OCI-LY7 (cell line): ENCODE measurements at regions of chr11 and their contacts with region 1.

Region 1: GRCh38 chr11:63738720-63739360 is 29.7 kb downstream of the ZFTA start:
- DNase-seq: peak; percentile 69
- H3K4me3 ChIP-seq: no peak overlapping the region
- H3K27ac ChIP-seq: no peak overlapping the region
- H3K4me1 ChIP-seq: peaks cover 3% of the 10 kb centered on the region
- CTCF ChIP-seq: peak; percentile 96

Region 2: GRCh38 chr11:63099555-63099954 is 639.3 kb before region 1 on chr11:
- CTCF ChIA-PET with region 1: no interaction called
- POLR2A ChIA-PET with region 1: no interaction called
- intact Hi-C with region 1: no loop called
- DNase-seq: no peak
- H3K4me3 ChIP-seq: no peak overlapping the region
- H3K27ac ChIP-seq: no peak overlapping the region
- H3K4me1 ChIP-seq: no peaks in the 10 kb centered on the region
- CTCF ChIP-seq: no peak

Region 3: DNA sequence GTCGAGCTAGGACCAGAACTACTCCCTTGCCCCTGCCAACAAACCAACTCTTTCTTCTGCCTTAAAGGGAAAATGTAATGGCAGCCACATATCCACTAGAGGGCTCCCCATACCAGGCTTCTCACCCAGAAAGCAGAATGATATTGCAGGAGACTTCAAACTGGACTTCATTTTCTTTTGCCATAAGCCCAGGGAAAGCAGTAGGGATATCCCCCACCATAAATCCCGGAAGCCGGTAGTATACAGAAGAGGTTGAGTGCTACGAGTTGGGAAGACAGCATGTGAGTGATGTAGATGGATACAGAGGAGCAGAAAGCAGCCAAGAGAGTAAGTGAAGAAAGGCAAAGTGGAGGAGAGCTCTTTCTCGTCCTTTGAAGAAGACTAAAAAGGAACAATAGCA is 259.9 kb before region 1 on chr11:
- CTCF ChIA-PET with region 1: no interaction called
- POLR2A ChIA-PET with region 1: no interaction called
- intact Hi-C with region 1: loop called (anchors 2 kb)
- DNase-seq: peak; percentile 71
- H3K4me3 ChIP-seq: no peak overlapping the region
- H3K27ac ChIP-seq: no peak overlapping the region
- H3K4me1 ChIP-seq: no peaks in the 10 kb centered on the region
- CTCF ChIP-seq: peak; percentile 99

Region 4: DNA sequence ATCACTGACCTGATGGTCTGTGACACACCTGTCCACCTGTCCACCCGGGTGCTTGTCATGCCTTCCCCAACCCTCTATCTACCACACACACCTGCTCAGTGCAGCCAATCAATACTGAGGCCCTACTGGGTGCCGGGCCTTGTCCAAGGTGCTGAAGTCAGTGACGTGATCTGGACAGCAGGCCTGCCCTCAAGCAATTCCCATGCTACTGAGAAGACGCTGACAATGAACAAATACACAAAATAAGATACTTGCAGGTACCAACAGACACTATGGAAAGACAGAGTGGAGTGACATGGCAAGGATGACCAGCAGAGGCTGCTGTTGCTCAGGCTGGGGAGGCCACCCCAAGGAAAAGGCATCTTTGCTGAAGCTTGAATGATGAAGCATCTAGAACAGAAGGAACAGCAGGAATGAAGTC is 145.9 kb before region 1 on chr11:
- CTCF ChIA-PET with region 1: no interaction called
- POLR2A ChIA-PET with region 1: no interaction called
- intact Hi-C with region 1: loop called (anchors 1 kb)
- DNase-seq: peak; percentile 33
- H3K4me3 ChIP-seq: no peak overlapping the region
- H3K27ac ChIP-seq: no peak overlapping the region
- H3K4me1 ChIP-seq: no peaks in the 10 kb centered on the region
- CTCF ChIP-seq: peak; percentile 75

Region 5: GRCh38 chr11:63635762-63636465 is 102.9 kb before region 1 on chr11:
- CTCF ChIA-PET with region 1: no interaction called
- POLR2A ChIA-PET with region 1: no interaction called
- intact Hi-C with region 1: loop called (anchors 5 kb)
- DNase-seq: peak; percentile 62
- H3K4me3 ChIP-seq: no peak overlapping the region
- H3K27ac ChIP-seq: no peak overlapping the region
- H3K4me1 ChIP-seq: no peaks in the 10 kb centered on the region
- CTCF ChIP-seq: peak; percentile 91

Region 6: DNA sequence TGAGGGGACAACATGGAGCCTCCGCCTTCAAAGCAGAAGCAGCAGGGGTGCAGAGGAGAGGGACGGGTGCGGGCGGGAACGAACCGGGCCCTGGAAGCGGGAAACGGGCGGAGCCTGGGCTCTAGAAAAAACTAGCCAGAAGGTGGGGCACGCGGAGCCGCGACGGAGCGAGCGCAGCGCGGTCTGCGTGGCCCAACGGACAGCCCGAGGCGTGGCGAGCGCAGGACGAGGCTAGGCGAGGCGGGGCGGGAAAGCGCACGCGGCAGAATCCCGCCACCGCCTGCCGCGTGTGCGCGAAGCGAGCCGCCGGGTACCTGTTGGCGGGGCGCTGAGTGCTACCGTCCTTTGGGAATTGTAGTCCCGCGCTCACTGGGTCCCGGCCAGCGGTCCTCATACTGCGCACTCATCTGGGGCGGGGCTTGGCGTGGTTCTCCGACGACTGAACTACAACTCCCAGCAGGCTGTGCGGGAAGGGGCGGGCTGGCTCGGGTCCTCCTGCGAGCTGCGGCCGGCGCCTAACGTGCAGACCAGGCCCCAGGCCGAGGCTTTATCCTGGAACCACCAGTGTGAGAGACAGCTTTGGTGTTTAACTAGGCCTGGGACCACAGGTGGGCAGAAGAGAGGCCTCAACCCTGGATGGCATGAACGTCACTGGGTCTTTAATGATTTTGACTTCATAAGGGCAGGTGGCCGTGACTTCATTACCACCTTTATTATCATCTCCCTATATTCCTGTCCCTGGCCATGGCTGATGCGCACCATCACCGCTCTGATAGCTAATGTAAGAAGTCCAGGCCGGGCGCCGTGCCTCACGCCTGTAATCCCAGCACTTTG is 67.3 kb before region 1 on chr11 and contains the start of gene ATL3:
- CTCF ChIA-PET with region 1: interaction called, 3 read pairs
- POLR2A ChIA-PET with region 1: interaction called, 4 read pairs
- intact Hi-C with region 1: loop called (anchors 1 kb)
- DNase-seq: peak; percentile 98
- H3K4me3 ChIP-seq: peak within 1 kb of the TSS; percentile 76
- H3K27ac ChIP-seq: peak within 1 kb of the TSS; percentile 48
- H3K4me1 ChIP-seq: peaks cover 27% of the 10 kb centered on the region
- CTCF ChIP-seq: no peak
- total RNA-seq, gene ATL3: 15.7 and 23.2 TPM in 2 replicates